Activated CD4-positive, alpha-beta T cell treated with anti-CD3 and anti-CD28 coated beads, Interleukin-2, amount 10 ng/mL, durations not matched to agents 24 days and 14 days (primary cell): ENCODE measurements at regions of chr7 and their contacts with region 1.

Region 1: GRCh38 chr7:114916261-114916892 is 5.5 kb upstream of the MDFIC start:
- DNase-seq: peak; percentile 72
- H3K4me3 Mint-ChIP-seq: peak overlapping the region; percentile 62
- H3K27ac Mint-ChIP-seq: peak overlapping the region; percentile 99
- H3K4me1 Mint-ChIP-seq: peaks cover 49% of the 10 kb centered on the region
- H3K27me3 Mint-ChIP-seq: no peaks in the 10 kb centered on the region

Region 2: DNA sequence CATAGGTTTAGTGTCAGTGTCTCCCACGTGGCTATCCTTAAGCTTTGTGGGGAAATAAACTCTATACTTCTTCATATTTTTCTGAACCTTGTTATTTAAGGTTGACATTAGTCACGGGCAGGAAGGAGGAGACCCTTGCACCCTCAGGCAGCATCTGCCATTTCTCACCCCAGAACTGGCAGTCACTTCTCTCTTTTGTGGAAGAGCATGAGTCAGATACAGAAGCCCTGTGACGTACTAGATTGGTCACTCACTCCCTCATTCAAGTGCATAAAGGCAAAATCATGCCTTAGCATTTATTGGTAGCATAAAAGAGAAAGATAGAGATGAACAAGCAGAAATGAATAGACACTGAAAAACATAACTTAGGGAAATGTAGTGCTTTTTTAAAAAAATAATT is 200.5 kb before region 1 on chr7:
- intact Hi-C with region 1: loop called (anchors 5 kb)
- DNase-seq: no peak
- H3K4me3 Mint-ChIP-seq: no peak overlapping the region
- H3K27ac Mint-ChIP-seq: no peak overlapping the region
- H3K4me1 Mint-ChIP-seq: peaks cover 7% of the 10 kb centered on the region
- H3K27me3 Mint-ChIP-seq: peaks cover 4% of the 10 kb centered on the region

Region 3: GRCh38 chr7:114789871-114790311 is 126.5 kb before region 1 on chr7:
- intact Hi-C with region 1: loop called (anchors 1 kb)
- DNase-seq: peak; percentile 42
- H3K4me3 Mint-ChIP-seq: no peak overlapping the region
- H3K27ac Mint-ChIP-seq: peak overlapping the region; percentile 87
- H3K4me1 Mint-ChIP-seq: peaks cover 37% of the 10 kb centered on the region
- H3K27me3 Mint-ChIP-seq: no peaks in the 10 kb centered on the region

Region 4: DNA sequence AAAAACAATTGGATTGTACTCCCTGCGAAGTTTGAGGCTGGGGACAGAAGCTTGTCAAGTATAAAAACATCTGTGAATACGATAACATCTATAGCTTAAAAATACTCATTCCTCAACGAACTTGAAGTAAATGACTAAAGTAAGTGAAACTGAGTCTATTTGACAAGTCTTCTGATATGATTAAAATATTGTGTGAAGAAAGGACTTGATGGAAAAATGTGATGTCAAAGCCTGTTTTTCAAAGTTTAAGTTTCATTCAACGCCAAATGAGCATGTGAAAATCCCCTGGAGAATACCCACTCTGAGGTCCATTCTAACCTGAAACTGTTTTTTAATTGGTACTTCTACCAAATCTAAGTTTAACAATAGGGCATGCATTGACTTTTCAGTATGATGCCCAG is 116.7 kb before region 1 on chr7:
- intact Hi-C with region 1: loop called (anchors 1 kb)
- DNase-seq: no peak
- H3K4me3 Mint-ChIP-seq: peak overlapping the region; percentile 13
- H3K27ac Mint-ChIP-seq: peak overlapping the region; percentile 96
- H3K4me1 Mint-ChIP-seq: peaks cover 43% of the 10 kb centered on the region
- H3K27me3 Mint-ChIP-seq: no peaks in the 10 kb centered on the region

Region 5: GRCh38 chr7:114889646-114890285 is 26.6 kb before region 1 on chr7:
- intact Hi-C with region 1: loop called (anchors 1 kb)
- DNase-seq: peak; percentile 70
- H3K4me3 Mint-ChIP-seq: peak overlapping the region; percentile 45
- H3K27ac Mint-ChIP-seq: peak overlapping the region; percentile 88
- H3K4me1 Mint-ChIP-seq: peaks cover 45% of the 10 kb centered on the region
- H3K27me3 Mint-ChIP-seq: no peaks in the 10 kb centered on the region